SK-N-SH (cell line): ENCODE measurements at regions of chr1 and their contacts with region 1.

Region 1: GRCh38 chr1:145957443-145958319 is at the start of gene LIX1L:
- DNase-seq: peak; percentile 95
- H3K4me3 ChIP-seq: peak within 1 kb of the TSS; percentile 62 to 74
- H3K27ac ChIP-seq: peak within 1 kb of the TSS; percentile 82 to 99
- H3K4me1 ChIP-seq: peaks cover 26 to 52% of the 10 kb centered on the region in 2 experiments
- H3K27me3 ChIP-seq: no peaks in the 10 kb centered on the region
- CTCF ChIP-seq: no peak
- EP300 ChIP-seq: no peak; a peak in 1 of 4 replicates
- RAD21 ChIP-seq: no peak
- polyA plus RNA-seq, gene LIX1L: 39.1 and 39.4 TPM in 2 replicates

Region 2: DNA sequence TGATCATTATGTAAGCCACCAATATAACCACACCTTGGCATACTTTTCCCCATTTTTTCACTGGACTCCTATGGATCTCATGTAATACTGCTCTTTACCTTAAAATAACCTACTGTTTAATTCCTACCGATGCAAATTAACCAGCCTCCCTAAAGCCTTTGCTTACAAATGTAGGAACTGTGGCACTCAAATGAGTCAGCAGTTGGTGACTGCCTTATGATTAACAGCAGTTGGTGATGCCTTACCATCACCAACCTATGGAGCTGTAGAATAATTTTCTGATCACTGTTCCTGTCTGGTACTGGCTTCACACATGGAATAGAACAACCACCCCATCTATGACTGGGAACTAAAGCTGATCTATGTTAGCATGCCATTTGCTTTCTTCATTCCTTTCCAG is 120.0 kb before region 1 on chr1:
- CTCF ChIA-PET with region 1: no interaction called
- POLR2A ChIA-PET with region 1: no interaction called
- DNase-seq: no peak
- H3K4me3 ChIP-seq: no peak overlapping the region
- H3K27ac ChIP-seq: no peak overlapping the region
- H3K4me1 ChIP-seq: no peaks in the 10 kb centered on the region
- H3K27me3 ChIP-seq: no peaks in the 10 kb centered on the region
- CTCF ChIP-seq: no peak
- EP300 ChIP-seq: no peak
- RAD21 ChIP-seq: no peak

Region 3: DNA sequence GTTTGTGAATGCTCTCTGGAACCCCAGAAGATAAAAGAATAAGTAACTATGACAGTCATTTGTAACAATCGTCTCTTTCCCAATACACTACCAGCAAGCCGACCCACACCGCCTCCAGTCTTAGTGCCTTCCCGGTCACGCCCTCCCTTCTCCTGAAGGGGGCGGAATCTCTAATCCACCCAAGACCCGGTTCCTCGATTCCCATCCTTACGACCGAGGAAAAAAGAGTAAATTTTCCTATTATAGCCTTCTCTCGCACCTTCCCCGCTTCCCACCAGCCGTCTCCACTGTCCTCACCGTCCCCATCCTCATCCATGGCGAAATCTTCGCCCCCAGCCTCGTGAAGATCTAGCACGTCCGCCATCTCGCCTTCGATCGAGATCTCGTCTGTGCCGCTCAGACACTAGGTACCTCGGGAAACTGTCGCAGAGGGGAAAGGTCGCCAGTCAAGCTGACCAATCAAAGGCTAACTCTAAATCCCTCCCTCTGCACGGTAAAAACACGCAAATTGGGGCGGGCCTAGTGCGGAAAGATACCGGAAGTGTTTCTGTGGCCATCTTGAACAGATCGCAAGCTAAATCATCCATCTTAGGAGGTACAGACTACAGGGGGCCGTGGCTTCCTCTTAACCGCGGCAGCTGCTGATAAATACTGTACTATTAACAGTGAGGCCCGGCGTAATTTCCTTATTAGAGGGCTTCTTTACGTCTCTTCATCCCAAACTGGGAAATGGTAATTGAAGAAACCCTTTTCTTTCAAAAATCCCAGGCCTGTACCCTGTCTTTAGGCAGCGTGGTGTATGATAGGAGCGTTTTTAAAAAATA is 30.4 kb before region 1 on chr1 and contains the start of gene RBM8A:
- CTCF ChIA-PET with region 1: interaction called, 8 read pairs
- POLR2A ChIA-PET with region 1: interaction called, 34 read pairs
- DNase-seq: peak; percentile 83
- H3K4me3 ChIP-seq: peak within 1 kb of the TSS; percentile 80 to 82
- H3K27ac ChIP-seq: peak within 1 kb of the TSS; percentile 95 to 96
- H3K4me1 ChIP-seq: peaks cover 7% of the 10 kb centered on the region in 2 experiments
- H3K27me3 ChIP-seq: no peaks in the 10 kb centered on the region
- CTCF ChIP-seq: peak; percentile 75
- EP300 ChIP-seq: 0 out of 4 replicates have a peak, but pooled peaks of 1 of the 2 experiments have one; percentile 1
- RAD21 ChIP-seq: peak; percentile 23; the same call in 1 of the 2 replicates
- polyA plus RNA-seq, gene RBM8A: 236 TPM in 2 replicates